ENCODE measurements at regions of chr3 and their contacts with region 1.

Region 1: GRCh38 chr3:136938334-136938733 is 19.4 kb upstream of the IL20RB start:
- DNase-seq: no peak
- ATAC-seq: peak in 1 of 8 donors; percentile 53
- H3K4me3 ChIP-seq: no peak overlapping the region
- H3K27ac ChIP-seq: peak overlapping the region in 2 of 10 donors; percentile 4 to 17
- H3K4me1 ChIP-seq: peaks cover 0 to 73% (median 23%) of the 10 kb centered on the region in 9 donors
- H3K27me3 ChIP-seq: no peaks in the 10 kb centered on the region
- CTCF ChIP-seq: no peak

Region 2: GRCh38 chr3:136869282-136869681 is 69.1 kb before region 1 on chr3:
- intact Hi-C with region 1: loop called in 4 of 10 experiments (anchors 5 to 10 kb)
- DNase-seq: no peak
- ATAC-seq: no peak
- H3K4me3 ChIP-seq: no peak overlapping the region
- H3K27ac ChIP-seq: no peak overlapping the region
- H3K4me1 ChIP-seq: peaks cover 0 to 13% (median 0%) of the 10 kb centered on the region in 9 donors
- H3K27me3 ChIP-seq: no peaks in the 10 kb centered on the region
- CTCF ChIP-seq: no peak

Region 3: DNA sequence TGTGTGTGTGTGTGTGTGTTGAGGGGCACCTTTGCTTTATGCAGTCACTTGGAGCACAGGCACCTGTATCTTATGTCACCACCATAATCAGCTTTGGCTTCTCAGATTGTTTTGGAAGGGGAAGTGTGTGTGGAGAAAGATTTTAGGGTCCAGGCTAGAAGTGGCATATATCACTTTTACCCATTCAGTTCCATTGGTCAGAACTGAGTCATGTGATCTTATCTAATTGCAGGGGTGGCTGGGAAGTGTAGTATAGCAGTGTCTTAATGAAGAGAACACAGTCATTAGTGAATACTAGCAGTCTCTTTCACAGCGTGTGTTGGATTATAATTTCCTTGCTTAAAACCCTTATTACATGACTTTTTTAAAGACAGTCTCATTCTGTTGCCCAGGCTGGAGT is 55.8 kb before region 1 on chr3:
- intact Hi-C with region 1: no loop called
- DNase-seq: no peak
- ATAC-seq: no peak
- H3K4me3 ChIP-seq: no peak overlapping the region
- H3K27ac ChIP-seq: no peak overlapping the region
- H3K4me1 ChIP-seq: peaks cover 0 to 37% (median 7%) of the 10 kb centered on the region in 9 donors
- H3K27me3 ChIP-seq: no peaks in the 10 kb centered on the region
- CTCF ChIP-seq: no peak

Region 4: DNA sequence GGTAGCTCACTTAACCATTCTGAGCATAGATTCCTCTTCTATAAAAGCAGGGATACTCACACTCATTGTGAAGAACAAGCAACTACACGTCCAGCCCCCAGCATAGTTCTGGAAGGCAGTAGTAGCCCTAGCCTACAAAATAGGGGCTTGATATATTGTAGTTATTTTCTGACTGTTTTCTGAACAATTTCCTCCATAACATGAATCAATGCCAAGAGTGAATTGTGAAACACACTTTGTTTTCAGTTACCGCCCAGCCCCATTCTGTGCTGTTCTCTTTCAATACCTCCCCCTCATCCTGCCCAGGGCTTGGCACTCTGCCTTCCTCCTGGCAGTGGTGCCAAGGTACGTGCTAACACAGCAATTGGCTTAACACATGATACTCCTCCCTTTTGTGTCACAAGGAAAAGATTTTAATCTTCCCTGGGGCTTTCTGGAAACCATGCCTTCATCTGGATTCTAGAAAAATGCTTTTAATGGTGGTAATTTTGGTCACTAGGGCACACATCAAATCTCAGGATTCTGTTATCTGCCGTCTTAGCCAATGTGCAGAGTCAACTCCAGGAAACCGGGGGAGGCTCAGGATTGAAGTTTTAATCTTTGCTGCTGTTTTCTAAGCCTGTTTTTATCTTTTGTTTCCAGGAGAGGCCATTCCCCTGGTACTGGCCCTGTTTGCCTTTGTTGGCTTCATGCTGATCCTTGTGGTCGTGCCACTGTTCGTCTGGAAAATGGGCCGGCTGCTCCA is 56.6 kb after region 1 on chr3:
- intact Hi-C with region 1: no loop called
- DNase-seq: peak; percentile 77 to 84
- ATAC-seq: peak; percentile 75 to 97 (median 95)
- H3K4me3 ChIP-seq: no peak overlapping the region
- H3K27ac ChIP-seq: peak overlapping the region; percentile 67 to 89 (median 81)
- H3K4me1 ChIP-seq: peaks cover 4 to 26% (median 18%) of the 10 kb centered on the region in 9 donors
- H3K27me3 ChIP-seq: no peaks in the 10 kb centered on the region
- CTCF ChIP-seq: no peak

Region 5: DNA sequence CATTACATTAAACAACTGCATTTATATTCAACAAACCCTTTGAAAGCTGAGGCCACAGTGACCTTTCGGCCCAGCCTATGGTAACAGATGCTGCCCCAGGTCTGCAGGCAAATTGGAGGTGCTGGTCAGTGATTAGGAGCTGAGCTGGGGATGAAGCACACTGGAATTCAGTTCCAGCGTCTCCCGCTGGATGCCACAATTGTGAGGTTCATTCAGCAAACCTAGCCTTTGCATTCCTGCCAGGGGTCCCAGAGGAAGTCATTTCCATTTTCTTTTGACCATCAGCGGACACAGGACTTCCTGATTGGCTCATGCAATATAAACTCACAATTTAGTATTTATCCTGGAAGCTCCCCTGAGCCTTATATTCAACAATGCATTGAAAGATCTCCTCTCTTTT is 108.9 kb after region 1 on chr3:
- intact Hi-C with region 1: no loop called
- DNase-seq: no peak
- ATAC-seq: no peak
- H3K4me3 ChIP-seq: no peak overlapping the region
- H3K27ac ChIP-seq: no peak overlapping the region
- H3K4me1 ChIP-seq: peaks cover 0 to 4% (median 0%) of the 10 kb centered on the region in 9 donors
- H3K27me3 ChIP-seq: peaks cover 0 to 36% (median 28%) of the 10 kb centered on the region in 7 donors
- CTCF ChIP-seq: no peak